ENCODE measurements at regions of chr12 and their contacts with region 1.

Region 1: DNA sequence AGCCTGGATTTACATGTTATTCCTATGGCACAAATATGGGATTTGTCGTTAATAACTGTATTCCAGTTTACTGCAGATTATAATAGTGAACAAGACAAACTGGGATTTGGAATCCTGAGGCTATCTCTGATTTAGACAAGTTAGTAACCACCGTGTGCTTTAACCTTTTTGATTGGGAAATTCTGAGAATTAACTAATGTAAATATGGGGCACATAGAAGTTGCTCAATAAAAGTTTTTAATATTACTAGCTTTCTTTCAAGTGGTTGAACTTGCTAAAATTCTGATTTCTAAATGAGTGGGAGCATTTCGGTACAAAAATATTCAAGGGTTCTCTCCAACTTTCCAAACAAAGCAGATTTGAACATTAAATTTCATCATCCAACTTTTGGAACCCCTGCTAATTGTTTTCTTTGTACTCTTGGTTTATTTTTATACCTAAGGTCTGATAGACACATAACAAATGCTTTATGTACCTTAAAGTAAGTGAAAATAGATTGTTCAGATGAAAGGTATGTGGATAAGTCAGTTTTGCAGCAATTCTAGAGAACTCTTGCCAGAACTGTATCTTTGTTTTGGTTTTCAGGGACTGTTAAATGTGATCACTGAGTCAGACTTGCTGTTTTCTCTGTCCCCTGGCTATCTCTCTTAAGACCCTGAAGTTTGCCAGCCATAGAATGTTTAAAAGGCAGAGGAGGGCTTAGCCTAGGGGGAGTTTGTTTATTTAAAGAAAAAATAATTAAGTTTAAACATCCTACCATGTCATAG is 57.5 kb downstream of the FRS2 start:
- DNase-seq: no peak
- H3K4me3 ChIP-seq: no peak overlapping the region
- H3K27ac ChIP-seq: peak overlapping the region in 1 of 2 donors; percentile 58
- H3K4me1 ChIP-seq: peaks cover 5% of the 10 kb centered on the region
- H3K27me3 ChIP-seq: no peaks in the 10 kb centered on the region
- CTCF ChIP-seq: no peak
- EP300 ChIP-seq: no peak
- POLR2A ChIP-seq: no peak

Region 2: GRCh38 chr12:68505970-68506369 is 1021.7 kb before region 1 on chr12:
- intact Hi-C with region 1: no loop called
- DNase-seq: no peak
- H3K4me3 ChIP-seq: no peak overlapping the region
- H3K27ac ChIP-seq: no peak overlapping the region
- H3K4me1 ChIP-seq: no peaks in the 10 kb centered on the region
- H3K27me3 ChIP-seq: no peaks in the 10 kb centered on the region
- CTCF ChIP-seq: no peak
- EP300 ChIP-seq: no peak
- POLR2A ChIP-seq: no peak

Region 3: GRCh38 chr12:69470189-69471075 is 57.3 kb before region 1 on chr12 and contains the start of gene FRS2:
- intact Hi-C with region 1: loop called in 1 of 4 experiments (anchors 10 kb)
- DNase-seq: peak; percentile 89 to 94 (median 92)
- H3K4me3 ChIP-seq: peak within 1 kb of the TSS; percentile 100
- H3K27ac ChIP-seq: peak within 1 kb of the TSS; percentile 59 to 73
- H3K4me1 ChIP-seq: peaks cover 13% of the 10 kb centered on the region
- H3K27me3 ChIP-seq: no peaks in the 10 kb centered on the region
- CTCF ChIP-seq: no peak
- EP300 ChIP-seq: no peak
- POLR2A ChIP-seq: peak; percentile 81
- total RNA-seq, gene FRS2: 39.9 to 64.2 (median 45.7) TPM